ENCODE measurements at regions of chr5 and their contacts with region 1.

Region 1: DNA sequence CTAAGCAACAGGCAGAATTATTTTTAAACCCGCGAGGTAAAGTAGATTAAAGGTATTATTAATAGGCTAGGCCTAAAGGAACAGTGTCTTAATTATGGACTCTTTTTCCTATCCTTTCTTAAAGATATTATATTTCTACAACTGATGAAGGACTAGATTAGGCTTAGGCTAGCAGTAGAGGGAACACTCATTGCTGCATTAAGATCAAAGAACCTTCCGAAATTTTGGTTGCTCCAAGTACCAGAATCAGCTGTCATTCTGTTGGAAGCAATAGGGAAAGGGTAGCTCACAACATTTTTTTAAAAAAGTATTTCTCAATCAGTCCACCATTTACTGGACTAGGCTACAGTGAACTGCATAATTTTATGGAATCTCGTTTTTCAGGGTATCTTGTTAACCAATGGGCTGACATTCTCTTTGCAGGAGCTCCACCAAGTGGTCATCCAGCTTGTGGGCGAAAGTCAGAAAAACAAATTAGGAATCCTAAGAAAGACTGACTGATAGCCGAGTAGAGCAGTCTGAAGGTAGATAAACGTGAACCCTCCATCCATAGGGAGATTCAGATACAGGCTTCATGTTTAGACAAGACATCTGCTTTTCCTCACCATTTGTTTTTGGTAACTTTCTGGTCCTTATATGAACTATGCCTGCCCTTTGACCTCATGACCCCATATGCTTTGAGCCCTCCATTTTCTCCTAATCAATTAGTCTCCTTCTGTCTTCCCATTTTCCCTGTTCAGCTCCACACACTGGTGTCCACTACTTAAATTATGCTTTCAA is 103.6 kb upstream of the CHD1 start:
- DNase-seq: peak in 4 of 5 donors; percentile 43 to 64 (median 50)
- ATAC-seq: peak; percentile 73 to 92 (median 84)
- H3K4me3 ChIP-seq: peak overlapping the region in 9 of 12 donors; percentile 26 to 54 (median 41)
- H3K27ac ChIP-seq: peak overlapping the region in 11 of 12 donors; percentile 26 to 83 (median 63)
- H3K4me1 ChIP-seq: peaks cover 0 to 62% (median 6%) of the 10 kb centered on the region in 12 donors
- H3K27me3 ChIP-seq: no peaks in the 10 kb centered on the region
- CTCF ChIP-seq: peak; percentile 59 to 95 (median 82)
- POLR2A ChIP-seq: no peak

Region 2: GRCh38 chr5:98898743-98899142 is 133.7 kb before region 1 on chr5:
- intact Hi-C with region 1: no loop called
- DNase-seq: no peak
- ATAC-seq: no peak
- H3K4me3 ChIP-seq: no peak overlapping the region
- H3K27ac ChIP-seq: no peak overlapping the region
- H3K4me1 ChIP-seq: no peaks in the 10 kb centered on the region
- H3K27me3 ChIP-seq: no peaks in the 10 kb centered on the region
- CTCF ChIP-seq: no peak
- POLR2A ChIP-seq: no peak

Region 3: DNA sequence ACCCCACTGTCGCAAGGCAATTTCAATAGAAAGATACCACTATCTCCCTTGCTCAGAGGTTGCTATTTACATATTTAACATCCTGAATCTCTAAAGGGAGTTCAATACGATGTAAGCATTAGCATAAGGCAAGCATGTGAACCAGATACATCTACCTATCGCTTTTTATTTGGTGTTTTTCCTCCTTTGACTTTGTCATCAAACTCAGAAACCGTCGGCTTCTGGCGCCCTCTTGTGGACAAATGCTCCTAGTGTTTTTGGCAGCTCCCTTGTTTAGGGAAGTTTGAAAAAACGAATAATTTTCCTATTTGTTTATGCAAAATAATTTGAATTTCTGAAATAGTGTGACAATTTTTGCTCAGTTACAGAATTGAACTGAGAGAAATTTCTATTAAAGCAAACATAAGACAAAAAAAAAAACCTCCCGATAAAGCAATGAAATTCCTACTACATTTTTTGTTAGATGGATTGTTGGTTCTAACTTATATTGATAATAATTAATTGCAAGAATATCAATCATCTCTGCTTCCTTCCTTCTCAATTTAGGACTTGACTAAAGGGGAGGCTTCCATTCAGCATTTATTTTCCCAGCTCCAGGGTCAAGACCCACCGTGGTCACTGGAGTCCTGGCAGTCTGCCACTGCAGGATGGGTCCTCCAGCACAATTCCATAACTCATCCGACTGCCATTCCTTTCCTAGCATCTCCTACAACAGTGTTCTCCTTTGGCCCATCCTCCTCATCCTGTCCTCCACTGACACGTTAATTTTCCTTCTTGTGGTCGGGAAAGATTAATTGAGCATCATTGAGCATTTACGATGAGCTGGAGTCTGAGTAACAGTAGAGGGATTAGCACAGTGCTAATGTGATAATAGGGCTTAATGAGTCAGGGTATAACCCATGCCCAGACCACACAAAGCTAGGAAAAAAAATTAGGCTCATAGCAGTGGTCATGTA is 28.2 kb after region 1 on chr5:
- intact Hi-C with region 1: loop called in 1 of 10 experiments (anchors 2 kb)
- DNase-seq: peak; percentile 51 to 84 (median 53)
- ATAC-seq: no peak
- H3K4me3 ChIP-seq: peak overlapping the region in 1 of 12 donors; percentile 5
- H3K27ac ChIP-seq: no peak overlapping the region
- H3K4me1 ChIP-seq: peaks cover 0 to 9% (median 0%) of the 10 kb centered on the region in 12 donors
- H3K27me3 ChIP-seq: no peaks in the 10 kb centered on the region
- CTCF ChIP-seq: peak; percentile 76 to 93 (median 86)
- POLR2A ChIP-seq: no peak

Region 4: DNA sequence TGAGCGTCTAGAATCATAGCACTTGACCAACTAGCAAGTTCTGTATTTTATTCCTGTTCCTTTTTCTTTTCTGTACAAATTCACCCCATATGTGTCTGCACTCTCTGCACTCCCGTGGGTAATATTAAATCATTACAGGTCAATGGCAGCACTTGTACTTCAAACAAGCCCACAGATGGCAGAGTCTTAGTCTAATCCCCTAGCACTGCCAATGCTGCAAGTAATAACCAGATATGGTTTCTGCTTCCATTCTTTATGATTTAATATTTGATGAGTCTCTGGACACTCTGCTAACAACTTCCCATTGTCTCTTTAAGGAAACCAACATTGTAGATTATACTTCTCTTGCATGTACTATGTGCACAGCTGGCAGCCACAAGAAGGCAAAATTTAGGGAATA is 240.2 kb after region 1 on chr5:
- intact Hi-C with region 1: no loop called
- DNase-seq: no peak
- ATAC-seq: no peak
- H3K4me3 ChIP-seq: no peak overlapping the region
- H3K27ac ChIP-seq: no peak overlapping the region
- H3K4me1 ChIP-seq: no peaks in the 10 kb centered on the region
- H3K27me3 ChIP-seq: no peaks in the 10 kb centered on the region
- CTCF ChIP-seq: no peak
- POLR2A ChIP-seq: no peak

Measured in heart left ventricle (tissue), 16 donors.